ENCODE measurements at regions of chr1 and their contacts with region 1.

Region 1: GRCh38 chr1:42846257-42847110 is at the start of gene ZNF691:
- DNase-seq: peak; percentile 99
- H3K4me3 ChIP-seq: peak within 1 kb of the TSS; percentile 68 to 97 (median 82)
- H3K27ac ChIP-seq: peak within 1 kb of the TSS; percentile 74 to 84 (median 82)
- H3K4me1 ChIP-seq: peaks cover 15 to 24% (median 18%) of the 10 kb centered on the region in 4 donors
- H3K27me3 ChIP-seq: no peaks in the 10 kb centered on the region
- CTCF ChIP-seq: peak; percentile 36 to 58 (median 55)
- EP300 ChIP-seq: no peak
- POLR2A ChIP-seq: peak; percentile 38
- total RNA-seq, gene ZNF691: 10.0 to 14.2 (median 12.7) TPM

Region 2: GRCh38 chr1:42657971-42658879 is 188.3 kb before region 1 on chr1 and contains the start of gene PPIH:
- intact Hi-C with region 1: loop called (anchors 10 kb)
- DNase-seq: peak; percentile 98
- H3K4me3 ChIP-seq: peak within 1 kb of the TSS; percentile 70 to 80 (median 76)
- H3K27ac ChIP-seq: peak within 1 kb of the TSS; percentile 74 to 79 (median 78)
- H3K4me1 ChIP-seq: peaks cover 16 to 21% (median 17%) of the 10 kb centered on the region in 4 donors
- H3K27me3 ChIP-seq: no peaks in the 10 kb centered on the region
- CTCF ChIP-seq: peak; percentile 20 to 51 (median 37)
- EP300 ChIP-seq: no peak
- POLR2A ChIP-seq: no peak
- total RNA-seq, gene PPIH: 12.5 to 17.2 (median 15.0) TPM

Region 3: DNA sequence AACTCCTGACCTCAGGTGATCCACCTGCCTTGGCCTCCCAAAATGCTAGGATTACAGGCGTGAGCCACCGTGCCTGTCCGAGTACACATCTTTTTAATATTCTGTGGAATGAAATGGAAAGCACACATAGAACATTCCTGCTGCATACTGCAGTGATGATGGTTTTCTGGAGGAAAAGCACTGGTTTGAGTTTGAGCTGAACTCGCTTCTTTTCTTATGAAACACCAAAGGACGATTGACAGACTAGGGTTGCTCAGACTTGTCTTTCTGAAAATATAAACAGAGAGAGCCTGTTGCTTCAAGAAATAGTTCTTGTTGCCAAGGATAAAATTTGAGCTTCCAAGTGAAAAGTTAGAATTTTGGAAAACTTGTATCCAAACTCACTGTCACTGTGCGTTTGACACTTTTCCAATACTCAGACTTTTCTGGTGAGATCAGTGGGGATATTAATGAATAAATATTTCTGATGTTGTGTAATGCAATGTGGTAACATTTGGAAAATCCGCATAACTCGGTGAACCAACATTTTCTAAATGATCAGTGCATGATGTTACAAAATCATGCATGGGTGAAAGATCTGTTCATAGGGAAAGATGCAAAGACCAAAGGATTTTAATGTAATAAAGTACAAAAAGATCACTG is 44.5 kb before region 1 on chr1:
- intact Hi-C with region 1: no loop called
- DNase-seq: no peak
- H3K4me3 ChIP-seq: no peak overlapping the region
- H3K27ac ChIP-seq: peak overlapping the region in 1 of 4 donors; percentile 58
- H3K4me1 ChIP-seq: no peaks in the 10 kb centered on the region
- H3K27me3 ChIP-seq: no peaks in the 10 kb centered on the region
- CTCF ChIP-seq: no peak
- EP300 ChIP-seq: no peak
- POLR2A ChIP-seq: no peak

Region 4: DNA sequence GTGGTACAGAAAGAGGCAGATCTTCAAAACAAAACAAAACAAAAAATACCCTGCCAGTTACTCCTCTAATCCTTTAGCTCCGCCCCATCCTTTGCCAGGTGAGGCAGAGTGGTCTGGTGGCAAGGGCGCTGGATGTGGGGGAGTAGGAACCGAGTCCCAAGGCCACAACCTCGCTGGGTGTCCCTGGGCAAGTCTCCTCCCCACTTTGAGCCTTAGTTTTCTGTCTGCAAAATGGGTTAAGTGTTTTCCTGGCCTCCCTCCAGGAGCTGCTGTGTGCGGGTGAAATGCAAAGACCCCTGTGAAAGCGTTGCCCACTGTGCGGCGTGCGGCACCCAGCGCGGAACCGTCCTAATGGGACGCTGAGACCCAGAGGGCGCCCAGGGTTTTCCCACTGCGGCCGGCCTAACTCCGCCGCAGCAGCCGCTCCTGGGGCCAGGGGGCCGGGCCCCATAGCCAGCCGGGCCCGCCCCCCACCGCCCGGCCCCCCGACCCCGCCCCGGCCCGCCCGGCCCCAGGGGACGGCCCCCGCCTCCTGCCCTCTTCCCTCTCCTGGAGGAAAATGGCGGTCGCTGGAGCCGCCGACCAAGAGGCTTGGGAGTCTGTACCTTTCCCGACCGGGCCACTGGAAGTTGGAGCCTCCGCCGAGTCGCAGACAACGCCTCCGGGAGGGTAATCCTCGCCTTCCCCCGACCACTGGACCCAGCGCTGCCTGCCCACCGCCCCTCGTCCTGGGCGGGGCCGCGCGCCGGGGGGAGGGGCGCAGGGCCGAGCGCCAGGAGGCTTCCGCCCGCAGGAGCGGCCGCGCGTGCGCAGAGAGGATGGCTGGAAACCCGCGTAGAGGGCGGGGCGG is 29.7 kb before region 1 on chr1 and contains the starts of genes ERMAP and SVBP:
- intact Hi-C with region 1: loop called (anchors 2 kb)
- DNase-seq: peak; percentile 97
- H3K4me3 ChIP-seq: peak within 1 kb of the TSS; percentile 69 to 88 (median 77)
- H3K27ac ChIP-seq: peak within 1 kb of the TSS; percentile 95 to 98 (median 97)
- H3K4me1 ChIP-seq: peaks cover 14 to 32% (median 28%) of the 10 kb centered on the region in 4 donors
- H3K27me3 ChIP-seq: no peaks in the 10 kb centered on the region
- CTCF ChIP-seq: no peak
- EP300 ChIP-seq: no peak
- POLR2A ChIP-seq: no peak
- total RNA-seq, gene ERMAP: 5.8 to 14.1 (median 9.1) TPM
- total RNA-seq, gene SVBP: 19.1 to 39.5 (median 23.1) TPM

Region 5: DNA sequence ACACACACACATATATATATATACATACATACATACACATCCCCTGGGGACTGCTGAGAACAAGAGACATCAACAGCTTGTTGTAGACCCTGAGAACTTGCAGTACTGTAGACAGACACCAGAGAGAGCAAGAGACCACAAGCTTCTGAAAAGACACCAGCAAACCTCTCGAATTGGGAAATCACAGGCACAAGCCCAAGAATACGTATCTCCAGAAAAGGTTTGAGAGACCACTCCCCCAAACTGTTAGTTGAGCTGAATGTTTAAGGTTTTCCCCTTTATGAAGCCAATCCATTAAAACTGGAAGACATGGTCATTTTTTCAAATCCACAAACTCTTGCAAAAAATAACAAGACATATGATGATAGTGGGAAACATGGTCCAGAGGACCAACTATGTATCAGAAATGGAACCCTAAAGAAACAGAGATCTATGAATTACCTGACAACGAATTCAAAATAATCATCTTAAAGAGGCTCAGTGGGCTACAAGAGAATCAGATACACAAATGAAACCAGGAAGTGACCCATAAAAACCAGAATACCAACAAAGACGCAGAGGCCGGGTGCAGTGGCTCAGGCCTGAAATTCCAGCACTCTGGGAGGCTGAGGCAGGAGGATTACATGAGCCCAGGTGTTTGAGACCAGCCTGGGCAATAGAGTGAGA is 67.1 kb after region 1 on chr1:
- intact Hi-C with region 1: no loop called
- DNase-seq: no peak
- H3K4me3 ChIP-seq: no peak overlapping the region
- H3K27ac ChIP-seq: no peak overlapping the region
- H3K4me1 ChIP-seq: no peaks in the 10 kb centered on the region
- H3K27me3 ChIP-seq: no peaks in the 10 kb centered on the region
- CTCF ChIP-seq: peak; percentile 79 to 95 (median 79)
- EP300 ChIP-seq: no peak
- POLR2A ChIP-seq: no peak